ENCODE measurements at regions of chr6 and their contacts with region 1.

Region 1: DNA sequence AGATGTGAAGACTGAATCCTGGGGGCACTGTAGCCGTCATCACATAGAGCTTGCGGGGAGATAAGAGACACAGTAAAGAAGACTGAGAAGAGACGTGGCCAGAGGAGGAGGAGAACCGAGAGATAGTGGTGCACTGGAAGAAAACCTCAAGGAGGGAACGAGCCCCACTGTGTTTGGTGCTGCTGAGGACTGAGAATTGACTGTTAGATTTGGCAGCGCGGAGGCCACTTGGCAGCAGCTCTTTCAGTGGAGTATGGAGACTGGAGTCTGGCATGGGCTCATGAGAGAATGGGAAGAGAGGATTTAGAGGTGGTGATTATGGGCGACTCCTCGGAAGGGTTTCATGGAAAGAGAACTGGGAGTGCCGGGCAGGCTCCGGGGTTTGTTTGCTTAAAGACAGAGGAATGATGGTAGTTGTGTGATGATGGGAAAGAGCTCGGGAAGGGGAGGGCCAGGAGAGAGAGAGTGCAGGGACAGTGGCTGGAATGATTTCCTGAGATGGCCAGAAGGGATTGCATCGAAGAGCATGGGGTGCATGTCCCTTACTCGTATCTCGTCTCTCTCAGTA is 18.0 kb downstream of the CDYL start:
- DNase-seq: peak; percentile 41 to 56
- ATAC-seq: peak in 7 of 8 donors; percentile 56 to 87 (median 81)
- H3K4me3 ChIP-seq: peak overlapping the region in 1 of 10 donors; percentile 11
- H3K27ac ChIP-seq: no peak overlapping the region
- H3K4me1 ChIP-seq: peaks cover 0 to 44% (median 24%) of the 10 kb centered on the region in 9 donors
- H3K27me3 ChIP-seq: no peaks in the 10 kb centered on the region
- CTCF ChIP-seq: no peak

Region 2: DNA sequence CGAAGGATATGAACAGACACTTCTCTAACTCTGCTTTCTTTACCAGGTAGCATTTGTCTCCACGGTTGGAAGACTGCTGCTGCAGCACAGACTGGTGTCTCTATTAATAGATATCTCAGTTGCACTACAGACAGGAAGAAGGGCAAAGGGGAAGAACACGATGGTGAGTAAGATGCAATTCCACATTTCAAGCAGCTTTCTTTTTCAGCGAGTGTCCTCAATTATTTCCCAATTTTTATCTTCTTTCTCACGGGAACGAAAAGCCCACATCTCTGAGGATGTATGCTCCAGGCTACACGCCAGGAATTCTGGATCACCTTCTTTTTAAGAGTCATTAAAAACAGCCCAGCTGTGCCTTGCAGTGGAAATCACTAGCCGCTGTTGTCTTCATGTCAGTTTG is 347.2 kb before region 1 on chr6:
- intact Hi-C with region 1: no loop called
- DNase-seq: no peak
- ATAC-seq: peak; percentile 38 to 93 (median 85)
- H3K4me3 ChIP-seq: peak overlapping the region in 3 of 10 donors; percentile 4 to 23 (median 13)
- H3K27ac ChIP-seq: peak overlapping the region; percentile 5 to 57 (median 44)
- H3K4me1 ChIP-seq: peaks cover 0 to 13% (median 0%) of the 10 kb centered on the region in 9 donors
- H3K27me3 ChIP-seq: no peaks in the 10 kb centered on the region
- CTCF ChIP-seq: no peak

Region 3: DNA sequence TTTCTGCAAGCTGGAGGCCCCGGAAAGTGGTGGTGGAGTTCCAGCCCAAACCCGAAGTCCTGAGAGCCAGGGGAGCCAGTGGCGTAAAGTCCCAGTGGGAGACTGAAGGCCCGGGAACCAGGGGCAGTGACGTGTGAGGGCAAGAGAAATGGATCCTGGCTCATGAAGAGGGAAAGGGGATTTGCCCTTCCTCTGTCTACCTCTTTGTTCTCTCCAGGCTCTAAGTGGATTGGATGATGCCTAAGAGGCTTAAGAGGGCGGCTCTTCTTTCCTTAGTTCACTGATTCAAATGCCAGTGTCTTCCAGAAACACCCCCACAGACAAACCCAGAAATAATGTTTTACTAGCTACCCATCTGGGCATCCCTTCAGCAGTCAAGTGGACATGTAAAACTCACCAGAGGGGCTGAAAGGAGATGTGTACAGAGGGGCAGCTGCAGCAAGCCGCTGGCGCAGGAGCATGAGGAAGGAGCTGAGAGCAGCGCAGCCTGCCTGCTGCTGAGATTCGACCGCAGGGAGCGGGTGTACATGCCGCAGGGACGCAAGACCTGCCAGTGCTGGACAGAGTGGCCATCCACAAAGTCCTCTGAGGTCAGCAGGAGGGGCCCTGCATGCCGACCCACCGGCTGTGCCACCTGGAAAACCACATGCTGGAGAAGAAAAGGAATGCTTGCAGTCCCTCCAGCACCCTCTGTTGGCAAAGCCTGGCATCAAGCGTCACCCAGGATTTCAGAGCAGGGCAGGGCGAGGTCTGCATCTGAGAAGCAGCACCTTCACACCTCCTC is 11.5 kb after region 1 on chr6:
- intact Hi-C with region 1: loop called in 1 of 10 experiments (anchors 1 kb)
- DNase-seq: peak; percentile 23 to 40
- ATAC-seq: peak in 7 of 8 donors; percentile 41 to 80 (median 68)
- H3K4me3 ChIP-seq: no peak overlapping the region
- H3K27ac ChIP-seq: no peak overlapping the region
- H3K4me1 ChIP-seq: peaks cover 4 to 57% (median 47%) of the 10 kb centered on the region in 9 donors
- H3K27me3 ChIP-seq: no peaks in the 10 kb centered on the region
- CTCF ChIP-seq: peak; percentile 23 to 66 (median 59)